Heart left ventricle (tissue), 16 donors: ENCODE measurements at regions of chr1 and their contacts with region 1.

Region 1: GRCh38 chr1:33472349-33472980 is at the start of gene ZSCAN20:
- DNase-seq: peak; percentile 98 to 99 (median 98)
- ATAC-seq: peak; percentile 90 to 94 (median 94)
- H3K4me3 ChIP-seq: peak within 1 kb of the TSS; percentile 42 to 74 (median 67)
- H3K27ac ChIP-seq: peak within 1 kb of the TSS; percentile 76 to 90 (median 86)
- H3K4me1 ChIP-seq: peaks cover 3 to 50% (median 34%) of the 10 kb centered on the region in 12 donors
- H3K27me3 ChIP-seq: no peaks in the 10 kb centered on the region
- CTCF ChIP-seq: no peak
- POLR2A ChIP-seq: peak in 1 of 2 donors; percentile 48
- total RNA-seq, gene ZSCAN20: 3.3 to 8.8 (median 6.4) TPM

Region 2: GRCh38 chr1:33094971-33095604 is 377.4 kb before region 1 on chr1:
- intact Hi-C with region 1: loop called in 4 of 10 experiments (anchors 5 to 10 kb)
- DNase-seq: peak in 2 of 5 donors; percentile 43 to 45
- ATAC-seq: peak in 1 of 4 donors; percentile 34
- H3K4me3 ChIP-seq: no peak overlapping the region
- H3K27ac ChIP-seq: no peak overlapping the region
- H3K4me1 ChIP-seq: peaks cover 0 to 45% (median 6%) of the 10 kb centered on the region in 12 donors
- H3K27me3 ChIP-seq: no peaks in the 10 kb centered on the region
- CTCF ChIP-seq: peak; percentile 93 to 99 (median 98)
- POLR2A ChIP-seq: no peak

Region 3: DNA sequence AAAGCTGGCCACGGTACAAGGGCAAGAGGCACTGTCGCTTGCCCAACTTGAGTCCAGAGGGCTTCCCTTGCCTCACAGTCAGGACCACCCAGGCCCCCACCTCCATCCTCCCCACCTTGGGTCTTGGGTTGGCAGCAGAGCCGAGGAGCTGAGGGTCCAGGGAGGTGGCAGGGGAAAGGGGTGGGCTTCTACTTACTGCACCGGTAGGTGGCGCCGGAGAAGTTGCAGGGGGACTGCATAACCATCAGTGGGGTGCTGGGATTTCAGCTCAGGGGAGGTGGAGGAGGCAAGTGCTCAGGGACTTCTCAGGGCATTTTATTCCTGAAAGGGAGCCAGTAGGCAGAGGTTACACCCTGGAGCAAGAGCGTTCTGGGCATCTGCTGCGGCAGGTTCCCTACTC is 334.7 kb before region 1 on chr1:
- intact Hi-C with region 1: loop called in 2 of 10 experiments (anchors 10 kb)
- DNase-seq: peak in 3 of 5 donors; percentile 42 to 64 (median 47)
- ATAC-seq: peak in 2 of 4 donors; percentile 48 to 50
- H3K4me3 ChIP-seq: no peak overlapping the region
- H3K27ac ChIP-seq: no peak overlapping the region
- H3K4me1 ChIP-seq: peaks cover 0 to 13% (median 0%) of the 10 kb centered on the region in 12 donors
- H3K27me3 ChIP-seq: no peaks in the 10 kb centered on the region
- CTCF ChIP-seq: peak; percentile 31 to 64 (median 52)
- POLR2A ChIP-seq: no peak

Region 4: GRCh38 chr1:33181921-33182341 is 290.5 kb before region 1 on chr1 and contains the start of gene TRIM62:
- intact Hi-C with region 1: no loop called
- DNase-seq: peak; percentile 90 to 94 (median 92)
- ATAC-seq: peak; percentile 78 to 92 (median 90)
- H3K4me3 ChIP-seq: peak within 1 kb of the TSS; percentile 59 to 93 (median 85)
- H3K27ac ChIP-seq: peak within 1 kb of the TSS; percentile 29 to 89 (median 76)
- H3K4me1 ChIP-seq: peaks cover 0 to 26% (median 9%) of the 10 kb centered on the region in 12 donors
- H3K27me3 ChIP-seq: peaks cover 0 to 4% (median 0%) of the 10 kb centered on the region in 9 donors
- CTCF ChIP-seq: no peak
- POLR2A ChIP-seq: peak in 1 of 2 donors; percentile 57
- total RNA-seq, gene TRIM62: 1.9 to 6.1 (median 3.3) TPM

Region 5: DNA sequence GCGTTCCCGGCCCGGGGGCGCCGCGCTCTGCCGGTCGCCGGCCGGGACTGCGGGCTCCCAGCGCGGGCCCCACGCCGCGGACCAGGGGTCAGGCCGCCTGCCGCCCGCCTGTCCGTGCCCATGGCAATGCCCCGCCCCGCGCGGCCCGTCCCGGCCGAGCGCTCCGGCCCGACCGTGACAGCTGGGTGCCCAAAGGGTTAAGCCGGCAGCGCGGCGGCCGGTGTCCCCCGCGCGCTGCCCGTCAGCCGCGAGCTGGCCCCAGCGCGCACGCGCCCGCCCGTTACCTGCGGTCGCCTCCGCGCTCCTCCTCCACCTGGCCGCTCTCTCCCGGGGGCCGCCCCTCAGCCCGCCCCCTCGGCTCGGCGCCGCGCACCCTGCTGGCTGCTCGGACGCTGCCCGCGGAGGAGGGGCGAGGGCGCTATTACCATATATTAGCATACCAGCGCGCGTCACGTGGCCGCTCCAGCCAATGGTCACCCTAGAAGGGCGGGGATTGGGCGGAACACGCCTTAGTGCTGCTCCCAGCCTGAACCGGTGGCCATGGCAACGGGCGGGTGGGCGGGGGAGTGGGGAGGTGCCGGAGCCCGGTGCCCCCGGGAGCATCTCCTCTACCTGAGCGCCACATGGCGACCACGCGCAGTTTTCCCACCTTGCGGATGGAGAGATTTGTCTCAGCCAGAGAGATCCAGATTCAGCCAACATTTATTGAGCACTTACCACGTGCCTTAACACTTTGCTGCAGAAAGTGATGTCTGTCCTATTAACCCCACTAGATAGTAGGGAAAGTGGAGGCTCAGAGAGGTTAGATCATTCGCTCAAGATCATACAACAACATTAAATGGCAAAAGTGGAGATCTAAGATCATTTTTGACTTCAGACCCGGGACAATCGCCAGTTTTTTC is 41.5 kb before region 1 on chr1 and contains the start of gene PHC2:
- intact Hi-C with region 1: loop called in 1 of 10 experiments (anchors 5 kb)
- DNase-seq: peak; percentile 97 to 99 (median 98)
- ATAC-seq: peak; percentile 96 to 97 (median 97)
- H3K4me3 ChIP-seq: peak within 1 kb of the TSS; percentile 64 to 93 (median 79)
- H3K27ac ChIP-seq: peak within 1 kb of the TSS; percentile 74 to 90 (median 82)
- H3K4me1 ChIP-seq: peaks cover 0 to 70% (median 26%) of the 10 kb centered on the region in 12 donors
- H3K27me3 ChIP-seq: peaks cover 0 to 4% (median 0%) of the 10 kb centered on the region in 9 donors
- CTCF ChIP-seq: peak in 9 of 12 donors; percentile 16 to 70 (median 41)
- POLR2A ChIP-seq: peak; percentile 19 to 56
- total RNA-seq, gene PHC2: 86.5 to 194 (median 99.4) TPM

Region 6: DNA sequence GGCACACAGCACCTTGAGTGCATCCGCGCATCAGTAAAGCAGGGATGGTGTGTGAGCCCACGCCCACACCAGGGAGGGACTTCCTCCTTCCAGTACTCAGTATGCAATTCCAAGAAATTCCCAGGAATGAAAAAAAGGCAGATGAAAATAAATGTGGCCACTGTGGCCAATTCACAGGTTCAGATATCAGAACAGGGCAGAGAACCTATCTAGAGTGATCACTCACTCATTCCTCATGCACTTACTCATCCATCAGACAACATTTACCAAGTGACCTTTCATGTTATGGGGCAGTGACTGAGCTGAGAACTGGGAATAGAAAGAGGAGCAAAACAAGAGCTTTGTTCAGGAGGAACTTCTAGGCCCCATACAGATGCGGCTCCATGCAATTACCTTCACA is 113.6 kb after region 1 on chr1:
- intact Hi-C with region 1: no loop called
- DNase-seq: no peak
- ATAC-seq: no peak
- H3K4me3 ChIP-seq: no peak overlapping the region
- H3K27ac ChIP-seq: no peak overlapping the region
- H3K4me1 ChIP-seq: peaks cover 0 to 8% (median 0%) of the 10 kb centered on the region in 12 donors
- H3K27me3 ChIP-seq: no peaks in the 10 kb centered on the region
- CTCF ChIP-seq: no peak
- POLR2A ChIP-seq: no peak

Region 7: DNA sequence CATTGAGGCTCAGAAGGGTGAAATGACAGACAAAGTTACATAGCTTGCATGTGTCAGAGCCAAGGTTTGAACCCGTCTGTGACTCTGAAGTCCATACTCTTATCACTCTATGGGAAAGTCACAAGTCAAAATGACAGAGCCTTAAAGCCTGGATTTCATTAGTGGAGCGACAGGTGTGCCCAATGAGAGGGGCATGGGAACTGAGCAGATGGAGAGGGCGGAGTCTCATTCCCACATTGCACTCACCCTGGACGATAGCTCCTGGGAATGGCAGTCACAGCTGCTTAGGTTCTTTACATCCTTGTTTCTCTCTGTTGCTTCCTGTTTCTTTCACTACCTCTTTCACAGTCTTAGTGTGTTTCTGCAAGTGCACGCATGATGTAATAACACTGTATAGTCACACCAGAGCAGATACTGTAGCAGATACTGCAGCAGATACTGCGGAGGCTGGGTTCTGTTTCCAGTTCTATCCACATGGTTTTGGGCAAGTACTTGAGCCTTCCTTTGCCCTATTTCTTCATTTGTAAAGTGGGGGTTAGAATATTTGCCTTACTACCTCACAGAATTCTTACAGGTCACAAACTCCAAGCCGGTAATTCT is 127.2 kb after region 1 on chr1:
- intact Hi-C with region 1: loop called in 1 of 10 experiments (anchors 5 kb)
- DNase-seq: no peak
- ATAC-seq: no peak
- H3K4me3 ChIP-seq: no peak overlapping the region
- H3K27ac ChIP-seq: no peak overlapping the region
- H3K4me1 ChIP-seq: peaks cover 0 to under 1% (median 0%) of the 10 kb centered on the region in 12 donors
- H3K27me3 ChIP-seq: no peaks in the 10 kb centered on the region
- CTCF ChIP-seq: no peak
- POLR2A ChIP-seq: no peak

Region 8: GRCh38 chr1:33616773-33617172 is 144.3 kb after region 1 on chr1:
- intact Hi-C with region 1: loop called in 9 of 10 experiments (anchors 2 to 5 kb)
- DNase-seq: no peak
- ATAC-seq: no peak
- H3K4me3 ChIP-seq: no peak overlapping the region
- H3K27ac ChIP-seq: no peak overlapping the region
- H3K4me1 ChIP-seq: peaks cover 0 to 6% (median 0%) of the 10 kb centered on the region in 12 donors
- H3K27me3 ChIP-seq: peaks cover 0 to 13% (median 0%) of the 10 kb centered on the region in 9 donors
- CTCF ChIP-seq: no peak
- POLR2A ChIP-seq: no peak

Region 9: GRCh38 chr1:33670567-33670966 is 198.1 kb after region 1 on chr1:
- intact Hi-C with region 1: no loop called
- DNase-seq: no peak
- ATAC-seq: peak in 2 of 4 donors; percentile 61 to 73
- H3K4me3 ChIP-seq: no peak overlapping the region
- H3K27ac ChIP-seq: no peak overlapping the region
- H3K4me1 ChIP-seq: peaks cover 0 to 22% (median 0%) of the 10 kb centered on the region in 12 donors
- H3K27me3 ChIP-seq: no peaks in the 10 kb centered on the region
- CTCF ChIP-seq: no peak
- POLR2A ChIP-seq: no peak